ENCODE measurements at regions of chr19 and their contacts with region 1.

Region 1: DNA sequence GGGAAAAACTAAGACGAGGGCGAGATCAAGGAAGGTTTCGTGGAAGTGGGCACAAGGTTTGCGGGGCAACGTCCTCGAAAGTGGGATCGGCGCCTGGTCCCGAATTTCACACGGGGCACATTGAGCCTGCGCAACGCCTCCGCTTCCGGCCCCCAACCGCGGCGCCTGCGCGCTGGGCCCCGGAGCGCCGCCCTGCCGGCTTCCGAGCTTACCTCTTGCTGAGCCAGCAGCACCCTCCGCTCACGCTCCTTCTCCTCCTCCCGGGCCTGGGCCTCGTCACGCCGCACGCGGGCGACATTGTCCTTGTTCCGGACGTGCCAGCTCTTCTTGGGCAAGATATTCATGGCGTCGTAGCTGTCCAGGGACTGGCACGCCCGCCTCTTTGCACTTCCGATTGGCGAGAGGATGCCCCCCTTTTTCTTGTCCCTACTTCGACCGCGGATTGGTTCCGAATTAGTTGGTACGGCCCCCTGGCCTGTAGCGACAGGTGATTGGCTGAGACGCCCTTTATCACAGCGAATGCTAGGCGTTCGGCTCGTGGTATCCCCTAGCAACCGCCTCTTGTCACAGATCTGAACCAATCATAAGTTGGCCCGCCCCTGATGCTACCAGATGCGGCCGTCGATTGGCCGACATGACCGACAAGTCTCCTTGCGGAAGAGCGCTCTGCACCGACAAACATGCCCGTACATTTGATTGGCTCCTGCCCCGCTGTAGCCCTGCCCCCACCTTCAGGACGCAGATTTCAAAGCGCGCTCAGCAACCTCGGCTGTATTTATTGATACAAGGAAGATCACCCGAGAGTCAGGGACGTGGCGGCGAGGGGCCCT is at the start of gene LENG1:
- ATAC-seq: peak; percentile 84 to 94 (median 90)
- H3K4me3 ChIP-seq: peak within 1 kb of the TSS; percentile 69 to 96 (median 83)
- H3K27ac ChIP-seq: peak within 1 kb of the TSS; percentile 83 to 94
- H3K4me1 ChIP-seq: peaks cover 8 to 15% of the 10 kb centered on the region in 2 donors
- total RNA-seq, gene LENG1: 8.2 to 12.5 (median 10.9) TPM

Region 2: GRCh38 chr19:54096617-54097129 is 62.9 kb before region 1 on chr19:
- in situ Hi-C with region 1: no loop called
- ATAC-seq: peak in 4 of 8 experiments; percentile 20 to 56 (median 42)
- H3K4me3 ChIP-seq: no peak overlapping the region
- H3K27ac ChIP-seq: no peak overlapping the region
- H3K4me1 ChIP-seq: peaks cover 0 to 6% of the 10 kb centered on the region in 2 donors

Region 3: GRCh38 chr19:54231077-54231931 is 71.7 kb after region 1 on chr19:
- in situ Hi-C with region 1: loop called in 1 of 9 experiments (anchors 10 kb)
- ATAC-seq: peak; percentile 96 to 100 (median 98)
- H3K4me3 ChIP-seq: peak overlapping the region in 1 of 5 donors; percentile 9
- H3K27ac ChIP-seq: no peak overlapping the region
- H3K4me1 ChIP-seq: peaks cover 0 to 2% of the 10 kb centered on the region in 2 donors

Region 4: GRCh38 chr19:54281007-54281728 is 121.6 kb after region 1 on chr19 and contains the start of gene LILRB2:
- in situ Hi-C with region 1: no loop called
- ATAC-seq: no peak
- H3K4me3 ChIP-seq: no peak within 1 kb of the TSS
- H3K27ac ChIP-seq: no peak within 1 kb of the TSS
- H3K4me1 ChIP-seq: no peaks in the 10 kb centered on the region
- total RNA-seq, gene LILRB2: 0.04 to 0.57 (median 0.18) TPM in 5 of 8 experiments, not detected in the others

Measured in motor neuron (in vitro differentiated cells).